PC-3 (cell line): ENCODE measurements at regions of chr12 and their contacts with region 1.

Region 1: DNA sequence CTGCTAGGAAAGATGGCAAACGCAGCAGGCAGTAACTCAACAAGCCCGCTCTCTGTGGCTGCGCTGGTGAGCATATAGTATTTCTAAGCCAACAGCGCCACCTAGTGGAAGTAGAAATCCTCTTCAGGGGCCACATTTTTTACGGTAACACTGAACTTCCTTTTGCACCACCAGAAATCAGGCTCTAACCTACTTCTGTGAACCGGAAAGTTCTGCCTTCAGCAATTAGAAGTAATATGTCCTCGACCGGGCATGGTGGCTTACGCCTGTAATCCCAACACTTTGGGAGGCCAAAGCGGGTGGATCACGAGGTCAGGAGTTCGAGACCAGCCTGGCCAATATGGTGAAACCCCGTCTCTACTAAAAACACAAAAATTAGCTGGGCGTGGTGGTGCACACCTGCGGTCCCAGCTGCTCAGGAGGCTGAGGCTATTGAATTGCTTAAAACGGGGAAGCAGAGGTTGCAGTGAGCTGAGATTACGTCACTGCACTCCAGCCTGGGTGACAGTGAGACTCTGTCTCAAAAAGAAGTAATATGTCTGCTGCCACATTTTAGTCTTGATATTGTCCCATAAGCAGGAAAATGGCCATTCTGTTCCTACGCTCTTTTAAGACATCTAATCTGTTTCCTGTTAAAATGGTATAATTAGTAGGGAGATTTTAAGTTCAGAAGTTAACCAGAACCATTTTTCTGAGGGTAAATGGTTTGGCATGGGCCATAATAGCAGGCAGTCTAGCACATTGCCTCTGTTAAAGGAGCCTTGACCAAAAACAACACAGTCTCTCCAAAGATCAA is 26.8 kb downstream of the APOBEC1 start:
- DNase-seq: peak; percentile 77
- ATAC-seq: peak; percentile 91
- H3K4me3 ChIP-seq: peak overlapping the region; percentile 37; the same call in 1 of the 2 replicates
- H3K27ac ChIP-seq: no peak overlapping the region
- H3K4me1 ChIP-seq: no peaks in the 10 kb centered on the region
- H3K27me3 ChIP-seq: peaks cover 8% of the 10 kb centered on the region; the same call in 1 of the 2 replicates
- CTCF ChIP-seq: peak; percentile 73

Region 2: DNA sequence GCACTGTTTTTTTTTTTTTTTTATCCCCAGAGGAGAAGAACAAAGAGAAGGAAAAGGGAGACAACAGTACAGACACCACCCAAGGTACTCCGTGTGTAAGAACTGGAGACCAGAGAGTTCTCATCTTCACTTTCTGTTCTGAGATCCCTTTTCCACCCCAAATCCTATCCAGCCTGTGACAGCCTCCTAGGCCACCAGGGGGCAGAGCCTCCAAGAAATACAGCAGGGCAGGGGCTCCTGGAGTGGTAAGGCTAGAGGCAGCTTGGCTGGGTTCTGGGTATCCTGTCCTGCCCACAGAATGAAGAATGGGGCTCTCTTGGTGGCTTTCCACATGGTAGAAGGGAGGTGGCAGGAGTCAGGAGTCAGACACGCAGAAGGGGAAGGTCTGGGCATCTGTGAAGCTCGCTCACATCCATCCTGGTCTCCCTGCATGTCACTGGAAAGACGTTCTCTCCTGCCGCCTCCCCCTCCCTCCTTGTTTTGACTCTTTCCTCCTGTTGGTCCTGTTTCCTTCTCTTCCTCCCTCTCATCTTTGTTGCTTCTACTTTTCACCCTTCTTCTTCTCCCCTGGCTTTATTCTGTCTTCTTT is 496.8 kb before region 1 on chr12:
- CTCF ChIA-PET with region 1: no interaction called
- POLR2A ChIA-PET with region 1: no interaction called
- intact Hi-C with region 1: loop called (anchors 2 kb)
- DNase-seq: peak; percentile 58
- ATAC-seq: peak; percentile 81
- H3K4me3 ChIP-seq: no peak overlapping the region
- H3K27ac ChIP-seq: no peak overlapping the region
- H3K4me1 ChIP-seq: no peaks in the 10 kb centered on the region
- H3K27me3 ChIP-seq: no peaks in the 10 kb centered on the region
- CTCF ChIP-seq: peak; percentile 73

Region 3: DNA sequence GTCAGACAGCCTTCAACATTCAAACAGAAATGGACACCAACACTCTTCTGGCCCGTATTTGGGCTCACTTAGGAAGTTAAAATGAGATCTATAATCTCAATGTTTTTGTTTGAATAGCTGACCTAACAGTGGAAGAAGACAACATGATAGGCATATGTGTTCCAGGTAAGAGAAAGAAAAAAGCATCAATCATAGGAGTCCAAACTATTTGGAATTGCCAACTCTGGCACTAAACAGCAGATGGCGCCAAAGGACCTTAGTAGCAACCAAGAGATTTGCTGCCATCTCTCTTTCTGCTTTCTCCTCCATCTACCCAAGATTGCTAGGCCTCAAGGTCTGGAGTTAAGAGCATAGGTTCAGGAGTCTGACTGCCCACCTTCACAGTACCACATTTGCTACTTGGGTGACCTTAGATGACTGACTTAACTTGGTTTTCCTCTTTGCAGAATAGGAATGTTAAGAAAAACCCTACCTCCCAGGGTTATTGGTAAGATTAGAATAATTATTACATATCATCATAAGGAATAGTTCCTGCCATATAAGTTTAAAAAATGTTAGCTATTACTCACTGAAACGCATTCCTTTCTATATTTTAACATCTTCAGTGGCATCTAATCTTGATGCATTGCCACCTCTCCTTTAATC is 419.2 kb before region 1 on chr12:
- CTCF ChIA-PET with region 1: interaction called, 3 read pairs
- POLR2A ChIA-PET with region 1: no interaction called
- intact Hi-C with region 1: loop called (anchors 1 kb)
- DNase-seq: peak; percentile 74
- ATAC-seq: peak; percentile 65
- H3K4me3 ChIP-seq: no peak overlapping the region
- H3K27ac ChIP-seq: no peak overlapping the region
- H3K4me1 ChIP-seq: no peaks in the 10 kb centered on the region
- H3K27me3 ChIP-seq: no peaks in the 10 kb centered on the region
- CTCF ChIP-seq: peak; percentile 88

Region 4: DNA sequence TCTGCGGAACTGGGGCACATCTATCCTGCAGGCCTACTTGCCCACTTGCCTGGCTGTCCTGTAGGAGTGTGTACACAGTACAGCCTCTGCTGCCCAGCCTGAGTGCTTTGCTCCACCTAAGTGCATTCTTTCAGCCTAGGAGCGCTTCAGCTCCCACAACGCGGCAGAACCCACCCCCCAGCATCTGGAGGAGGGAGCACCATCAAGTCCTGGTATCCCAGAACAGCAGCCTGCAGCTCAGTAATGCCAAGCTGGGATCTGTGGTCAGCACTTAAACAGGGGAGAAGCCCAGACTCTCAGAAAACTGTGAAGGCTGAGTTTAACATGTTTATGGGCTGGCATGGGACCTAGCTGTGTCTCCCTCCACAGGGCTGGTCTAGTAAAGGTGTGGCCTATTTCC is 55.4 kb before region 1 on chr12:
- CTCF ChIA-PET with region 1: no interaction called
- POLR2A ChIA-PET with region 1: no interaction called
- intact Hi-C with region 1: loop called (anchors 1 kb)
- DNase-seq: no peak
- ATAC-seq: no peak
- H3K4me3 ChIP-seq: no peak overlapping the region
- H3K27ac ChIP-seq: no peak overlapping the region
- H3K4me1 ChIP-seq: no peaks in the 10 kb centered on the region
- H3K27me3 ChIP-seq: no peaks in the 10 kb centered on the region
- CTCF ChIP-seq: no peak